MCF 10A (cell line): ENCODE measurements at regions of chr11 and their contacts with region 1.

Region 1: GRCh38 chr11:64284048-64284961 is at the start of gene BAD:
- DNase-seq: peak; percentile 94
- H3K4me3 Mint-ChIP-seq: peak within 1 kb of the TSS; percentile 76
- H3K27ac Mint-ChIP-seq: peak within 1 kb of the TSS; percentile 84
- H3K4me1 Mint-ChIP-seq: peaks cover 10% of the 10 kb centered on the region
- H3K27me3 Mint-ChIP-seq: no peaks in the 10 kb centered on the region
- CTCF ChIP-seq: no peak
- total RNA-seq, gene BAD: 67.4 and 79.7 TPM in 2 replicates

Region 2: GRCh38 chr11:64185816-64186498 is 98.3 kb before region 1 on chr11 and contains the start of gene STIP1:
- CTCF ChIA-PET with region 1: no interaction called
- POLR2A ChIA-PET with region 1: interaction called, 3 read pairs
- intact Hi-C with region 1: loop called (anchors 5 kb)
- DNase-seq: peak; percentile 100
- H3K4me3 Mint-ChIP-seq: no peak within 1 kb of the TSS
- H3K27ac Mint-ChIP-seq: no peak within 1 kb of the TSS
- H3K4me1 Mint-ChIP-seq: peaks cover 7% of the 10 kb centered on the region
- H3K27me3 Mint-ChIP-seq: no peaks in the 10 kb centered on the region
- CTCF ChIP-seq: peak; percentile 23
- total RNA-seq, gene STIP1: 161 and 171 TPM in 2 replicates

Region 3: DNA sequence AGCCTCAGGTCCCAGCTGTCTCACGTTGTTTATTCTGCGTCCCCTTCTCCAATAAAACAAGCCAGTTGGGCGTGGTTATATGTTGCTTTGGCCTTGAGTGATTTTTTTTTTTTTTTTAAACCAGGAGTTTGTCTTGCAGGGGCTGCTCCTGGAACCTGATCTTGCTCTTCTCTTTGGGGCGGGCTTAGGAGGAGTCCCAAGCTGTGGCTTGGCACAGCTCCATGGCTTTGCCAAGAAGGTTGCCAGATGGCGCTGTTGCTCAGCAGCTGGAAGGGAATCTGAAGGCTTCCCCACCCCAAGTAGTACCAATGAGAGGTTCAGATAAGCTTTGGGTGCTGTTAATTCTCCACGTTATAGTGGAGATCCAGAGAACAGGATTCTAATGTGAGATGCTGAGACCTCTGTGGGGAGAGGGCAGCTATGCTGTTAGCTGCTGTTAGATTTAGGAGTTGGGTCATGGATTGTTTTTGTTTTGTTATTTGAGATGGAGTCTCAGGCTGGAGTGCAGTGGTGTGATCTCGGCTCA is 79.8 kb before region 1 on chr11:
- CTCF ChIA-PET with region 1: interaction called, 3 read pairs
- POLR2A ChIA-PET with region 1: interaction called, 3 read pairs
- intact Hi-C with region 1: loop called (anchors 1 kb)
- DNase-seq: peak; percentile 96
- H3K4me3 Mint-ChIP-seq: no peak overlapping the region
- H3K27ac Mint-ChIP-seq: peak overlapping the region; percentile 37
- H3K4me1 Mint-ChIP-seq: peaks cover 12% of the 10 kb centered on the region
- H3K27me3 Mint-ChIP-seq: no peaks in the 10 kb centered on the region
- CTCF ChIP-seq: peak; percentile 83

Region 4: DNA sequence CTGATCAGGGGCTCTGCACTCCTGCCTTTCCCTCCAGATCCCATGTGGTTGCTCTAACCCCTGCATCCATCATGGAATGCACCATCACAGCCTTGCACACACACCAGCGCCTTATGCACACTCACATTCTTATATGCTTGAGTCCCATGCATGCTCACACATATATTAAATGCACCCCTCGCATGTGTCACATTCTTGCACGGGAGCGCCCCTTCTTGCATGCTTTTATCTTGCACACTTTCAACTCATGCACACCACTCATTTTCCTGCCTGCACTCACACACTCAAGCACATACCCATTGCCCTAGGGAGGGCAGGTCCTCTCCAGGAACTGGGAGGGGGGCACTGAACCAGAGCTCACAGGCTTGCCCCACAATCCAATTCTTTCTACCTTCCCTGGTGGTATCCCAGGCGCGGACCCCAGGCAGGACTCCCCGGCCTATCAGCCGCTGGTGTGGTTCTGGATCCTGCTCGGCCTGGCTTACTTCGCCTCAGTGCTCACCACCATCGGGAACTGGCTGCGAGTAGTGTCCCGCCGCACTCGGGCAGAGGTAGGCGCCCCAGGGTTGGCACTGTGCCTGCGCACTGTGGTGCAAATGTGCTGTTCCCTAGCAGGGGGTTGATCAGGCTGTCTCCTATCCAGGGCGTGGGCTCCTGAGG is 13.5 kb after region 1 on chr11:
- CTCF ChIA-PET with region 1: interaction called, 96 read pairs
- POLR2A ChIA-PET with region 1: interaction called, 17 read pairs
- intact Hi-C with region 1: no loop called
- DNase-seq: no peak
- H3K4me3 Mint-ChIP-seq: no peak overlapping the region
- H3K27ac Mint-ChIP-seq: no peak overlapping the region
- H3K4me1 Mint-ChIP-seq: peaks cover 10% of the 10 kb centered on the region
- H3K27me3 Mint-ChIP-seq: no peaks in the 10 kb centered on the region
- CTCF ChIP-seq: no peak